Aorta (tissue), 5 donors: ENCODE measurements at regions of chr5 and their contacts with region 1.

Region 1: DNA sequence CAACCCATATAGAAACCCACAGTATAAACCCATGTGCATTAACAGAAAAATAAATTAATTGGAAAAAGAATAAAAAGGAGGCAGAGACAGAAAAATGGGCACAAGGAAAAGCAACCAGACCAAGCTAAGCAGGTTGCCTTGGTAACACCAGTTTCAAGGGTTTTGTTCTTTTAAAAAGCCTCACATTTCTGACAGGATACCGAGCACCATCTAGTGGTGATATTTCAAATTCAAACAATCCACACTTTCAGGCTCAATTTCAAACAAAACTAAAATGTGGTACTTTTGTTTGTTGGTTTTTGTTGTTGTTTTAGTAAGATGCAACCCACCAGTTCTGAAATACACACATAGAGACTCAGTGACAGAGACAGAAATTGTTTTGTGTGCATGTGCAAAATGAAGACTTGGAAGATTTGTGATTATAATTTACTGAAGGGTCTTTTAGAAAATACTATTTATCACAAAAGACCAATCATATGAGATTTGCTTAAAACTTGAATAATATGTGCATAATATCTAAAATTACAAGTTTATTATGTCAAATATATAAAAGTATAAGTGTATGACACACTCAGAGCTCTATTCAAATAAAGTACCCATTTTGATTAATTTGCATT is 318.2 kb downstream of the SLCO4C1 start:
- DNase-seq: no peak
- ATAC-seq: no peak
- H3K4me3 ChIP-seq: no peak overlapping the region
- H3K27ac ChIP-seq: no peak overlapping the region
- H3K4me1 ChIP-seq: no peaks in the 10 kb centered on the region
- H3K27me3 ChIP-seq: no peaks in the 10 kb centered on the region

Region 2: DNA sequence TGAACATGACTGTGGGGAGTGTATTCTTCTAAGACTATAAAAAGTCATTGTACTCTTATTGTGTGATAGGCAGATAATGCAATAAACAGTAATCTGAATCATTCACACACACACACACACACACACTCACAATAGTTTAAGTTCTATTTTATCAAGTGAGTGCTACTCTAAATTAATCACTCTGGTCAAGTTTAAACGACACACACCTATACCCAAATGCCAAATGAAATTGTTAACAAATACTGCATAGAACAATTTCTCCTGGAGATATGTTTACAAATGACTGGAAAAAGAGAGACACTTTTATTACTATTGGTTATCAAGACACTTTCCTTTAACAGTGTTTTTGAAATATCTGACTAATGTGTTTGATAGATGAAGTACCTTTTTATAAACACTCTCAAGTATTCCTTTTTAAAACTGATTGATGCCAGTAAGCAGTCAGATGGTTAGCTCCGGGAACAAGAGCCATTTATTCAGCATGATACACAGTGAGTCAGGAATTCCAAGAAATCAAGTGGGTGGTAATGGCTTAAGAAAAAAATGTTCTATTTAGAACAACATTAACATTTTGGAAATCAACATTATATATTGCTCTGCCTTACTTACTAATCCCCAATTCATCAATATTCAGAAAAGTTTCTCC is 553.2 kb before region 1 on chr5:
- intact Hi-C with region 1: loop called in 1 of 2 experiments (anchors 10 kb)
- DNase-seq: no peak
- ATAC-seq: peak; percentile 80
- H3K4me3 ChIP-seq: no peak overlapping the region
- H3K27ac ChIP-seq: no peak overlapping the region
- H3K4me1 ChIP-seq: no peaks in the 10 kb centered on the region
- H3K27me3 ChIP-seq: no peaks in the 10 kb centered on the region

Region 3: GRCh38 chr5:101435768-101436167 is 542.1 kb before region 1 on chr5:
- intact Hi-C with region 1: no loop called
- DNase-seq: no peak
- ATAC-seq: no peak
- H3K4me3 ChIP-seq: no peak overlapping the region
- H3K27ac ChIP-seq: no peak overlapping the region
- H3K4me1 ChIP-seq: no peaks in the 10 kb centered on the region
- H3K27me3 ChIP-seq: no peaks in the 10 kb centered on the region

Region 4: GRCh38 chr5:101580591-101580990 is 397.2 kb before region 1 on chr5:
- intact Hi-C with region 1: no loop called
- DNase-seq: no peak
- ATAC-seq: no peak
- H3K4me3 ChIP-seq: no peak overlapping the region
- H3K27ac ChIP-seq: no peak overlapping the region
- H3K4me1 ChIP-seq: no peaks in the 10 kb centered on the region
- H3K27me3 ChIP-seq: no peaks in the 10 kb centered on the region

Region 5: GRCh38 chr5:101678481-101679193 is 299.2 kb before region 1 on chr5:
- intact Hi-C with region 1: loop called in 1 of 2 experiments (anchors 5 kb)
- DNase-seq: peak in 1 of 2 donors; percentile 48
- ATAC-seq: peak; percentile 79
- H3K4me3 ChIP-seq: no peak overlapping the region
- H3K27ac ChIP-seq: no peak overlapping the region
- H3K4me1 ChIP-seq: no peaks in the 10 kb centered on the region
- H3K27me3 ChIP-seq: no peaks in the 10 kb centered on the region

Region 6: DNA sequence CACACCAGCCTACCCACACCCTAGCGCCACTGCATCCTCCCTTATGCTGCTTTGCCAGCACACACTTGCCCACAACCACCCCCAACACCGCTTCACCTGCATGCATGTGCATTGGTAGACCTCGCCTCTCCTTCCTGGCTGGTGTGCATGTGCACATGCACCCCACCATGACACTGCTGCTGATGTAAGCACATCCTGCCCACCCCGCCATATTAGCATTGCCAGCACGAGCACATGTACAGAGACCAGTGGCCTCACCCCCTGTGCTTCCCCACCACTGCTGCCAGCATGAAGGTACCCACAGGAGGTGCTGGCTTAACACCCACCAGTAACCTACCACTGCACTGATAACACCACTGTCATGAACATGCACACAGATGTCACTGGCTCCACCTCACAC is 100.1 kb after region 1 on chr5:
- intact Hi-C with region 1: no loop called
- DNase-seq: no peak
- ATAC-seq: no peak
- H3K4me3 ChIP-seq: no peak overlapping the region
- H3K27ac ChIP-seq: no peak overlapping the region
- H3K4me1 ChIP-seq: no peaks in the 10 kb centered on the region
- H3K27me3 ChIP-seq: no peaks in the 10 kb centered on the region